ENCODE measurements at regions of chr14 and their contacts with region 1.

Region 1: GRCh38 chr14:105075379-105076295 is 10.4 kb upstream of the GPR132 start:
- DNase-seq: peak; percentile 83 to 96 (median 96)
- H3K4me3 ChIP-seq: peak overlapping the region in 6 of 7 experiments; percentile 26 to 61 (median 40)
- H3K27ac ChIP-seq: peak overlapping the region in 1 of 2 experiments; percentile 33
- H3K4me1 ChIP-seq: peaks cover 3 to 41% (median 34%) of the 10 kb centered on the region in 4 experiments
- H3K27me3 ChIP-seq: no peaks in the 10 kb centered on the region

Region 2: GRCh38 chr14:105065280-105066228 is 10.1 kb before region 1 on chr14 and contains the start of gene GPR132:
- CTCF ChIA-PET with region 1: interaction called, 143 read pairs
- POLR2A ChIA-PET with region 1: interaction called, 28 read pairs
- DNase-seq: peak; percentile 95 to 99 (median 99)
- H3K4me3 ChIP-seq: peak within 1 kb of the TSS; percentile 24 to 69 (median 38)
- H3K27ac ChIP-seq: peak within 1 kb of the TSS; percentile 33 to 78
- H3K4me1 ChIP-seq: peaks cover 12 to 90% (median 84%) of the 10 kb centered on the region in 4 experiments
- H3K27me3 ChIP-seq: no peaks in the 10 kb centered on the region

Measured in common myeloid progenitor, CD34-positive (primary cell).